ENCODE measurements at regions of chr7 and their contacts with region 1.

Region 1: DNA sequence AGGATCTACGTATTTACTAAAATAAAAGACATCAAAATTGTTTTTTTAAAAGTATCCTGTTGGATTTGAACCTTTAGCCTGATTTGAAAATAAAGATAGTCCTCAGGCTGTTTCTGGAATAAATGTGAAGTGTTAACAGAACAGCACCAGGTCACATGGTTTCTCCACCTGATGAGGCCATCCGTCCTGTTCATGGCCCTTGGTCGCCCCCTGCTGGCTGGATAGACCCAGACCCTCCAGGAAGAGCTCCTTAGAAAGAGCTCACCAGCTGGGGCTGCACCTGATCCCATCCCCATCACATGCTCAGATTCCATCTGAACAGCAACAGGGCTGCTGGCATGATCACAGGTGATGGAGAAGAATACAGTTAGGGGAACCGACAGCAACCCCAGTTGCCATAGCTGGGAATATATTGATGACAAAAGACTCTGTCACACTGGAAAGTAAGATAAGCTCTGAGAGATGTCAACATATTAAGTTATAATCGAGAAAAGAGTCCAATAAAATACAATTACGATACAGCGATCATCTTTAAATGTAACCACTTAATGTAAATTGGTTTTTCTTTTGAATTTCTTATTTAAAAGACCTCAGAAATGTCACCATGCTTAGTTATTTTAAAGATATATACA is 4.8 kb downstream of the OR2A14 start:
- DNase-seq: peak; percentile 97
- H3K4me3 Mint-ChIP-seq: no peak overlapping the region
- H3K27ac Mint-ChIP-seq: no peak overlapping the region
- H3K4me1 Mint-ChIP-seq: no peaks in the 10 kb centered on the region
- H3K27me3 Mint-ChIP-seq: no peaks in the 10 kb centered on the region

Region 2: GRCh38 chr7:143735962-143736361 is 391.9 kb before region 1 on chr7:
- CTCF ChIA-PET with region 1: interaction called, 14 read pairs
- intact Hi-C with region 1: no loop called
- DNase-seq: no peak
- H3K4me3 Mint-ChIP-seq: no peak overlapping the region
- H3K27ac Mint-ChIP-seq: no peak overlapping the region
- H3K4me1 Mint-ChIP-seq: peaks cover 23% of the 10 kb centered on the region
- H3K27me3 Mint-ChIP-seq: no peaks in the 10 kb centered on the region

Region 3: GRCh38 chr7:144113651-144114050 is 14.2 kb before region 1 on chr7:
- CTCF ChIA-PET with region 1: interaction called, 10 read pairs
- intact Hi-C with region 1: no loop called
- DNase-seq: no peak
- H3K4me3 Mint-ChIP-seq: no peak overlapping the region
- H3K27ac Mint-ChIP-seq: no peak overlapping the region
- H3K4me1 Mint-ChIP-seq: no peaks in the 10 kb centered on the region
- H3K27me3 Mint-ChIP-seq: peaks cover 2% of the 10 kb centered on the region

Region 4: GRCh38 chr7:144142187-144142586 is 14.4 kb after region 1 on chr7:
- CTCF ChIA-PET with region 1: interaction called, 10 read pairs
- intact Hi-C with region 1: no loop called
- DNase-seq: no peak
- H3K4me3 Mint-ChIP-seq: no peak overlapping the region
- H3K27ac Mint-ChIP-seq: no peak overlapping the region
- H3K4me1 Mint-ChIP-seq: no peaks in the 10 kb centered on the region
- H3K27me3 Mint-ChIP-seq: no peaks in the 10 kb centered on the region

Region 5: GRCh38 chr7:144174613-144175012 is 46.8 kb after region 1 on chr7:
- CTCF ChIA-PET with region 1: no interaction called
- intact Hi-C with region 1: no loop called
- DNase-seq: no peak
- H3K4me3 Mint-ChIP-seq: no peak overlapping the region
- H3K27ac Mint-ChIP-seq: no peak overlapping the region
- H3K4me1 Mint-ChIP-seq: peaks cover 5% of the 10 kb centered on the region
- H3K27me3 Mint-ChIP-seq: peaks cover 2% of the 10 kb centered on the region

Region 6: GRCh38 chr7:144997512-144997911 is 869.7 kb after region 1 on chr7:
- CTCF ChIA-PET with region 1: no interaction called
- intact Hi-C with region 1: no loop called
- DNase-seq: no peak
- H3K4me3 Mint-ChIP-seq: no peak overlapping the region
- H3K27ac Mint-ChIP-seq: no peak overlapping the region
- H3K4me1 Mint-ChIP-seq: peaks cover 8% of the 10 kb centered on the region
- H3K27me3 Mint-ChIP-seq: no peaks in the 10 kb centered on the region